ENCODE measurements at regions of chr10 and their contacts with region 1.

Region 1: DNA sequence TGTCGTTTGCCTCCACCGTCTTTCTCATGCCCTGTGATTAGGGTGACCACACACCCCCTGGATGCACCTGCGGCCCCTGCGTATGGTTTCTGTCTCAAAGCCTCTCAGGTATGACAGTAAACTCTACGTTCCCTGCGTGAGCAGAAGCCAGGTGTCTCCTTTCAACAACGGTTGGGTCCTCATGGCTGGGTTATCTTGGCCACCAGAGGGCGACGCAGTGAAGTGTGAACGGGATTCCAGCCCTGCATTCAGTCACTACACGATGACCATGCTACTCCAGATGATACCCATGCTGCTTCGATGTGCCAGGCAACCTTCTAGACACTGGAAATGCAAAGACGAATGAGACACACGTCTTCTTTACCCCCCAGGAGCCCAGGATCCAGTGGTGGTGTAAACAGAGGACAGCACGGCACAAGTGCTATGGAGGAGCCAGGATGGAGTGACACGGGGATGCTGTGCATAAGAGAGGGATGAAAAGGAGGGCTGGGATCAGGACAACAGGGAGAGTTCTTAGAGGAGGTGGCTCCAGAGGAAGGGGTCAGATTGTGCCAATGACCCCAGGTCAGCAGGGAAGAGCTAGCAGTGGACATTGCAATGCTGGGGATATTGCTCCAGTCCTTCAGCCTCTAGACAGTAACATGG is 228.1 kb upstream of the PFKP start:
- DNase-seq: peak; percentile 66 to 72
- H3K4me3 ChIP-seq: no peak overlapping the region
- H3K4me3 Mint-ChIP-seq: no peak overlapping the region
- H3K27ac Mint-ChIP-seq: no peak overlapping the region
- H3K4me1 ChIP-seq: no peaks in the 10 kb centered on the region
- H3K4me1 Mint-ChIP-seq: no peaks in the 10 kb centered on the region
- H3K27me3 ChIP-seq: no peaks in the 10 kb centered on the region; the same call in 1 of the 2 replicates
- H3K27me3 Mint-ChIP-seq: peaks cover 37% of the 10 kb centered on the region
- CTCF ChIP-seq: peak; percentile 73 to 93

Region 2: GRCh38 chr10:2011106-2011716 is 828.0 kb before region 1 on chr10:
- CTCF ChIA-PET with region 1: no interaction called
- POLR2A ChIA-PET with region 1: no interaction called
- intact Hi-C with region 1: no loop called
- DNase-seq: no peak
- H3K4me3 ChIP-seq: no peak overlapping the region
- H3K4me3 Mint-ChIP-seq: no peak overlapping the region
- H3K27ac Mint-ChIP-seq: no peak overlapping the region
- H3K4me1 ChIP-seq: no peaks in the 10 kb centered on the region
- H3K4me1 Mint-ChIP-seq: no peaks in the 10 kb centered on the region
- H3K27me3 ChIP-seq: no peaks in the 10 kb centered on the region
- H3K27me3 Mint-ChIP-seq: peaks cover 8% of the 10 kb centered on the region
- CTCF ChIP-seq: no peak

Region 3: GRCh38 chr10:2927958-2928840 is 89.0 kb after region 1 on chr10:
- CTCF ChIA-PET with region 1: no interaction called
- POLR2A ChIA-PET with region 1: no interaction called
- intact Hi-C with region 1: loop called (anchors 1 kb)
- DNase-seq: peak; percentile 75 to 82
- H3K4me3 ChIP-seq: no peak overlapping the region
- H3K4me3 Mint-ChIP-seq: no peak overlapping the region
- H3K27ac Mint-ChIP-seq: no peak overlapping the region
- H3K4me1 ChIP-seq: no peaks in the 10 kb centered on the region
- H3K4me1 Mint-ChIP-seq: no peaks in the 10 kb centered on the region
- H3K27me3 ChIP-seq: no peaks in the 10 kb centered on the region
- H3K27me3 Mint-ChIP-seq: peaks cover 14% of the 10 kb centered on the region
- CTCF ChIP-seq: peak; percentile 82

Region 4: GRCh38 chr10:3151889-3152565 is 312.8 kb after region 1 on chr10:
- CTCF ChIA-PET with region 1: no interaction called
- POLR2A ChIA-PET with region 1: no interaction called
- intact Hi-C with region 1: no loop called
- DNase-seq: peak in 1 of 2 experiments; percentile 23
- H3K4me3 ChIP-seq: no peak overlapping the region
- H3K4me3 Mint-ChIP-seq: no peak overlapping the region
- H3K27ac Mint-ChIP-seq: no peak overlapping the region
- H3K4me1 ChIP-seq: no peaks in the 10 kb centered on the region
- H3K4me1 Mint-ChIP-seq: no peaks in the 10 kb centered on the region
- H3K27me3 ChIP-seq: no peaks in the 10 kb centered on the region
- H3K27me3 Mint-ChIP-seq: no peaks in the 10 kb centered on the region
- CTCF ChIP-seq: no peak

Region 5: DNA sequence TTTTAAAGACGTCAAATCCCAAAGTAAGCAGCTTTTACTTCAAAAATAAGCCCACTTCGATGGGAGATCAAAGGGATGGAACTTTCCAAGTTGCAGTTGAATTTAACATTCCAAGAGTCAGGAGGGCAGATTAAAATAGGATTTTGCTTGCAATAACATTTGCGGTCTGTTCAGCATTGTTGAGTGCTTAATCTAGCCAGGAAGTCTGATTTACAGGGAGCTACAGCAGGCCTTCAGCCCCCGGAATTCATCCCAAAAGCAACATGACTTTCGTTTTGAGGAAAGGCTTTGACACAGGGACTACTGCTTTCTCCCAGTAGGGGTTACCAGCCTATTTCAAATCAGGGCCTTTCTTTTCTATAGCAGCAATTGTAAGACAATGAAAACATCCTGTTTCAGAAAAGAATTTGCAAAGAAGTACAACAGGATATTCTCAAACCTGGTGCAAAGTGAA is 613.0 kb after region 1 on chr10:
- CTCF ChIA-PET with region 1: no interaction called
- POLR2A ChIA-PET with region 1: no interaction called
- intact Hi-C with region 1: no loop called
- DNase-seq: no peak
- H3K4me3 ChIP-seq: no peak overlapping the region
- H3K4me3 Mint-ChIP-seq: no peak overlapping the region
- H3K27ac Mint-ChIP-seq: no peak overlapping the region
- H3K4me1 ChIP-seq: peaks cover 9% of the 10 kb centered on the region; the same call in 1 of the 2 replicates
- H3K4me1 Mint-ChIP-seq: no peaks in the 10 kb centered on the region
- H3K27me3 ChIP-seq: no peaks in the 10 kb centered on the region
- H3K27me3 Mint-ChIP-seq: peaks cover 12% of the 10 kb centered on the region
- CTCF ChIP-seq: peak in 1 of 2 experiments; percentile 17

Measured in Caco-2 (cell line).